Activated CD8-positive, alpha-beta T cell treated with anti-CD3 and anti-CD28 coated beads, Interleukin-2, amount 10 ng/mL, durations not matched to agents 7 days and 5 days (primary cell): ENCODE measurements at regions of chr12 and their contacts with region 1.

Region 1: DNA sequence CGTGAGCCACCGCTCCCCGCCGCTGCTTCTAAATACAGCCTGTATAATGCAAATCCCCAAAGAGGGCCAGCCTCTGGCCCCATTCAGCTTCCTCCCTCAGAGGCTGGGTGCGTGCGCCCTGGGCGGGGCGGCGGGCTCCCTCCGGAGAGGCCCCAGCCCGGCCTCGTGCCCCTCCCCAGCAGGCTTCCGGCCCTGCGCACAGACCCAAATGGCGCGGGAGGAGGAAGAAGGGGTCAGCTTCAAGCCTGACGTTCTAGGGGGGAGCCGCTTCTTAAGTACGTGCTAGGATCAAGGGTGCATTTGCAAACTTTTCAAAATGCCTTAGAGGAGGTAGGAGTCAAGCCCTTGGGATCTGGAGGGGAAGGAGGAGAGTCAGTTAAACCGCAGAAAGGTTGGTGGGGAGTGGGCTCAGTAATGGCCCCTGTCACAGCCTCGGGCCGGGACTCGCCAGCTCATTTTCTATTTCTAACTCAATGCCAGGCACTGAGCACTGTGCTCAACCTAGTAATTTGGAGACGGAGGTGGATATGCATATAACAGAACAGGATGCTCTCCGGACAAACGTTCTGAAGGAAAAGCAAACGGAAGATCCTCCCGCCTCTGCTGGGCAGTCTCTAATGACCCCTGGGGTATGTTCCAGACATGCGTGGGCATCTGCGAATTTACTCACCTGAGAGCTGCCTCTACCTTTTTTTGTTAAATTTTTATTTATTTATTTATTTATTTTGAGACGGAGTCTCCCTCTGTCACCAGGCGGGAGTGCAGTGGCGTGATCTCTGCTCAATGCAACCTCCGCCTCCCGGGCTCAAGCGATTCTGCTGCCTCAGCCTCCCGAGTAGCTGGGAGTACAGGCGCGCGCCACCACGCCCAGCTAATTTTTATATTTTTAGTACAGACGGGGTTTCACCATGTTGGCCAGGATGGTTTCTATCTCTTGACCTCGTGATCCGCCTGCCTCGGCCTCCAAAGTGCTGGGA is 32.3 kb downstream of the NINJ2 start:
- DNase-seq: peak; percentile 81
- ATAC-seq: peak; percentile 97
- H3K4me3 Mint-ChIP-seq: peak overlapping the region; percentile 83
- H3K27ac Mint-ChIP-seq: peak overlapping the region; percentile 93
- H3K4me1 Mint-ChIP-seq: peaks cover 43% of the 10 kb centered on the region
- H3K27me3 Mint-ChIP-seq: no peaks in the 10 kb centered on the region

Region 2: GRCh38 chr12:614411-614970 is 16.5 kb before region 1 on chr12:
- CTCF ChIA-PET with region 1: interaction called, 11 read pairs
- POLR2A ChIA-PET with region 1: interaction called, 16 read pairs
- DNase-seq: peak; percentile 46
- ATAC-seq: no peak
- H3K4me3 Mint-ChIP-seq: no peak overlapping the region
- H3K27ac Mint-ChIP-seq: no peak overlapping the region
- H3K4me1 Mint-ChIP-seq: peaks cover 72% of the 10 kb centered on the region
- H3K27me3 Mint-ChIP-seq: no peaks in the 10 kb centered on the region